Endothelial cell of umbilical vein (primary cell): ENCODE measurements at regions of chr2 and their contacts with region 1.

Region 1: DNA sequence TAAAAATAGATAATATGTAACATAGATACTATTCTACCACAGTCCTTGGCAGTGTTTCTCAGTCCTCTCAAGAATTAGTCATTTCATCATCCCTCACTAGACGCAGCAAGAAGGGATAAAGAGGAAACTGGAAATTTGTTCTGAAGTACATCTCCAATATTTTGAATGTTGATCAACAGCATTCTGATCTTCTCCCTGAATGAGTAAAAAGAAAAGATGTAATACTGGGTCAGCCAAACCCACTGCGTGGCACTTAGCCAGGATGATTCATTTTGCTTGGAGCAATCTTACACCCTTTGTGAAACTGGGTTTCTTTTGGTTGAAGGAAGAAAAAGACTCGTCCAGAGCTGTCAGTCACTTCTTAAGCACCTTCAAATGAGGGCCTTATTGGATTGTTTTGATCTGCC is 54.1 kb downstream of the TAF1B start:
- DNase-seq: peak; percentile 84
- H3K4me3 ChIP-seq: no peak overlapping the region
- H3K27ac ChIP-seq: no peak overlapping the region
- H3K4me1 ChIP-seq: peaks cover 7% of the 10 kb centered on the region
- H3K27me3 ChIP-seq: no peaks in the 10 kb centered on the region
- CTCF ChIP-seq: no peak
- POLR2A ChIP-seq: no peak

Region 2: GRCh38 chr2:9770308-9771100 is 126.8 kb before region 1 on chr2:
- CTCF ChIA-PET with region 1: no interaction called
- POLR2A ChIA-PET with region 1: no interaction called
- dilution Hi-C with region 1: no loop called
- intact Hi-C with region 1: no loop called
- DNase-seq: peak; percentile 51
- H3K4me3 ChIP-seq: no peak overlapping the region
- H3K27ac ChIP-seq: no peak overlapping the region
- H3K4me1 ChIP-seq: no peaks in the 10 kb centered on the region
- H3K27me3 ChIP-seq: no peaks in the 10 kb centered on the region
- CTCF ChIP-seq: peak; percentile 68 to 77
- POLR2A ChIP-seq: no peak

Region 3: DNA sequence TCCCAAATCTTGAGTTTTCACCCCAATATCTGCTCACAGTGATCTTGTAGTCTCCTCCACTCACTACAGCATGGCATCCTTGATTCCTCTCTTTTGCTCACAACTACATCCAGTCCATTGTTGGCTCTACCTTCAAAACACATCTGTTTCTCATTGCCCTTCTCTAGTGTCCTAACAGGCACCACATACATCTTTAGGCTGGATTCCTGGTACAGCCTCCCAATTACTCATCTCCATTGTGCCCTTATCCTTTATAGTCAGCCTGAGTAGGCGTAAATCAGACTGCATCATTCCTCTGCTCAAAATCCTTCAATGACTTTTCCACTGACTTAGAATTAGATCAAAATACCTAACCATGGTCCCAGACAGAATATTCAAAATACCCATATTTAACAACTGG is 64.7 kb before region 1 on chr2:
- CTCF ChIA-PET with region 1: no interaction called
- POLR2A ChIA-PET with region 1: no interaction called
- dilution Hi-C with region 1: no loop called
- intact Hi-C with region 1: no loop called
- DNase-seq: no peak
- H3K4me3 ChIP-seq: no peak overlapping the region
- H3K27ac ChIP-seq: no peak overlapping the region
- H3K4me1 ChIP-seq: no peaks in the 10 kb centered on the region
- H3K27me3 ChIP-seq: peaks cover 11 to 15% of the 10 kb centered on the region in 2 experiments
- CTCF ChIP-seq: no peak
- POLR2A ChIP-seq: no peak

Region 4: DNA sequence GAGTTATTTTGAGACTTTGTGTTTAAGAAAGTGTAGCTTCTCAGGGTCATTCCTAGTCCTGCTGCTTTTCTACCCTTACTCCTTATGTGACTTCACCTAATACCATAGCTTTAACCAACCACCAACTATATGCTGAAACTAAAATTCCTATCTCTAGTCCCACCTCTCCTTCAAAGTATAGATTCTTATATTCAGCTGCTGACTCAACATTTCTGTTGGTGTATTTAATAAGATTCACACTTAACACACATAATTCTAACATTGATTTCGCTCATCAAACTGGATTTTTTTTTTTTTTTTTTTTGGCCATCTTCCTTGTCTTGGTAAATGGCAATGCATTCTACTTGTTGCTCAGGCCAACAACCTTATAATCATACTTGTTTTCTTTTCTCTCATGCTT is 24.0 kb before region 1 on chr2:
- CTCF ChIA-PET with region 1: no interaction called
- POLR2A ChIA-PET with region 1: no interaction called
- dilution Hi-C with region 1: no loop called
- intact Hi-C with region 1: no loop called
- DNase-seq: no peak
- H3K4me3 ChIP-seq: no peak overlapping the region
- H3K27ac ChIP-seq: no peak overlapping the region
- H3K4me1 ChIP-seq: no peaks in the 10 kb centered on the region
- H3K27me3 ChIP-seq: no peaks in the 10 kb centered on the region
- CTCF ChIP-seq: no peak
- POLR2A ChIP-seq: no peak

Region 5: GRCh38 chr2:9885036-9885684 is 12.2 kb before region 1 on chr2:
- CTCF ChIA-PET with region 1: interaction called, 11 read pairs
- POLR2A ChIA-PET with region 1: no interaction called
- dilution Hi-C with region 1: no loop called
- intact Hi-C with region 1: no loop called
- DNase-seq: peak; percentile 13
- H3K4me3 ChIP-seq: no peak overlapping the region
- H3K27ac ChIP-seq: no peak overlapping the region
- H3K4me1 ChIP-seq: no peaks in the 10 kb centered on the region
- H3K27me3 ChIP-seq: no peaks in the 10 kb centered on the region
- CTCF ChIP-seq: no peak
- POLR2A ChIP-seq: no peak

Region 6: GRCh38 chr2:9914384-9915065 is 17.2 kb after region 1 on chr2:
- CTCF ChIA-PET with region 1: interaction called, 6 read pairs
- POLR2A ChIA-PET with region 1: interaction called, 5 read pairs
- dilution Hi-C with region 1: no loop called
- intact Hi-C with region 1: loop called (anchors 2 kb)
- DNase-seq: peak; percentile 37
- H3K4me3 ChIP-seq: no peak overlapping the region
- H3K27ac ChIP-seq: peak overlapping the region; percentile 6
- H3K4me1 ChIP-seq: peaks cover 6% of the 10 kb centered on the region
- H3K27me3 ChIP-seq: no peaks in the 10 kb centered on the region
- CTCF ChIP-seq: no peak
- POLR2A ChIP-seq: no peak